HAP-1 (cell line): ENCODE measurements at regions of chr3 and their contacts with region 1.

Region 1: GRCh38 chr3:184543843-184544512 is 17.6 kb upstream of the EPHB3 start:
- DNase-seq: peak; percentile 73 to 91
- H3K4me3 ChIP-seq: no peak overlapping the region
- H3K4me1 ChIP-seq: no peaks in the 10 kb centered on the region; the same call in 1 of the 2 replicates
- H3K27me3 ChIP-seq: peaks cover 9% of the 10 kb centered on the region

Region 2: GRCh38 chr3:183884427-183885296 is 659.3 kb before region 1 on chr3 and contains the start of gene PARL:
- in situ Hi-C with region 1: loop called (anchors 25 kb)
- DNase-seq: peak; percentile 84 to 98
- H3K4me3 ChIP-seq: peak within 1 kb of the TSS; percentile 98
- H3K4me1 ChIP-seq: peaks cover 3% of the 10 kb centered on the region
- H3K27me3 ChIP-seq: no peaks in the 10 kb centered on the region

Region 3: GRCh38 chr3:184371570-184372018 is 172.4 kb before region 1 on chr3:
- in situ Hi-C with region 1: loop called (anchors 5 kb)
- DNase-seq: peak; percentile 81 to 84
- H3K4me3 ChIP-seq: no peak overlapping the region
- H3K4me1 ChIP-seq: no peaks in the 10 kb centered on the region
- H3K27me3 ChIP-seq: 0 out of 2 replicates have a peak, but pooled peaks cover 2% of the 10 kb centered on the region